ENCODE measurements at regions of chr9 and their contacts with region 1.

Region 1: DNA sequence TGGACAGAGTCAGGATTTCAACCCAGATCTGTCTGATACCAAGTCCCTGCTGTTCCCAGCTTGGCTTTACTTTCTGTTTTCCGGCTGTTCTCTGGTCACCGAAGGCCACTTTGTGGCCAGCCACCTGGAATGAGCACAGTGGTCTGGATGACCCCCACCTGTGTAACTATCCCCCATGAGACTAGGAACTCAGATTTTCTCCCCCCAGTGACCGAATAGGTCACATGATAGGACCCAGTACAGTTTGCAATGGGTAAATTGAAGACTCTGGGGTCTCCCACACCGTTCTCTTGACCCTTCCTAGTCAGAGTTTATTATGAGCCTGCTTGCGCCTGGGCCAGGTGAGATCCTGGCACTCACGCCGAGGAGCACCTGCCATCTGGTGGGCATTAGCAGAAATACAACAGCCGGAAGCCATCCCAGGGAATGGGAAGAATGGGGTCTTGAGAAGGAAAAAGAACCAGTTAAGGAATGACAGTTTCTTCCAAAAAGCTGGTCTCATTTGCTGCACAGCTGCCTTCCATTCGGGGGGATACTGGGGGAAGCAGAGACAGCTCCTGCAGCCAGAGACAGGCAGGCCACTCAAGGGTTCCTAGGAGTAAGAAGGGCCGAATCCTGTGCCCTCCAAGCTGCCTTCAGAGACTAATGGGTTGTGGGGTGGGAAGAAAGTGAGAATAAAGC is 7.1 kb downstream of the PHYHD1 start:
- DNase-seq: peak; percentile 20 to 67 (median 38)
- H3K4me3 ChIP-seq: no peak overlapping the region
- H3K4me3 Mint-ChIP-seq: no peak overlapping the region
- H3K27ac ChIP-seq: no peak overlapping the region
- H3K27ac Mint-ChIP-seq: peak overlapping the region in 1 of 8 donors; percentile 82
- H3K4me1 ChIP-seq: peaks cover 5% of the 10 kb centered on the region
- H3K4me1 Mint-ChIP-seq: peaks cover 6 to 9% (median 6%) of the 10 kb centered on the region in 3 donors
- H3K27me3 ChIP-seq: no peaks in the 10 kb centered on the region
- H3K27me3 Mint-ChIP-seq: no peaks in the 10 kb centered on the region

Region 2: DNA sequence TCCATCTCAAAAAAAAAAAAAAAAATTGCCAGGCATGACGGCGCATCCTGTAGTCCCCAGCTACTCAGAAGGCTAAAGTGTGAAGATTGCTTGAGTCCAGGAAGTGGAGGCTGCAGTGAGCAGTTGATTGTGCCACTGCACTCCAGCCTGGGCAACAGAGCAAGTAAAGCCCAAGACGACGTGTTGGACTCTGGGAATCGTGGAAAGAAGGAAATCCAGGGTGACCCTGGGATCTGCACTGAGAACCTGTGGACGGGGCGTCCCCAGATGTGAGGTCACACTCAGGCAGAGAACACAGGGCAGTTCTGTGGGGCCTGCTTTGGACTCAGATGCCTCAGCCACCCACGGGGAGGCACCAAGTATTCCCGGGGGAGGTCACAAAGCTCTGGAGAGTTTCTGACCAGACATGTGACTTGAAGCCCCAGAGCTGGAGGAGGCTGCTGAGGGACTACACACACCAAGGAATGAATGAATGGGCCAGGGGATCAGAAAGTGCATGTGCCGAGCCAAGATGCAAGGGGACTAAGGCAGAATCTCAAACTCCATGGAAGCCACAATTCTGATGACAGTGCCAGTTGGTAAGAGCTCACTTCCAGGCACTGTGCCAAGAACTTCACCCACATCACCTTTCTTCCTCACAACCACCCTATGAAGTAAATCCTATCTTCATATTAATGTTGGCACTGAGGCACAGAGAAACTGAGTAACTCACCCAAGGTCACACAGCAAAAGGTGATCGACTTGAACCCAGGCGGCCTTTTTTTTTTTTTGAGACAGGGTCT is 284.2 kb before region 1 on chr9:
- CTCF ChIA-PET with region 1: interaction called, 16 read pairs
- POLR2A ChIA-PET with region 1: interaction called, 8 read pairs
- DNase-seq: no peak
- H3K4me3 ChIP-seq: no peak overlapping the region
- H3K4me3 Mint-ChIP-seq: no peak overlapping the region
- H3K27ac ChIP-seq: no peak overlapping the region
- H3K27ac Mint-ChIP-seq: peak overlapping the region in 3 of 8 donors; percentile 29 to 51 (median 33)
- H3K4me1 ChIP-seq: no peaks in the 10 kb centered on the region
- H3K4me1 Mint-ChIP-seq: no peaks in the 10 kb centered on the region
- H3K27me3 ChIP-seq: no peaks in the 10 kb centered on the region
- H3K27me3 Mint-ChIP-seq: no peaks in the 10 kb centered on the region

Region 3: GRCh38 chr9:128805661-128806060 is 122.2 kb before region 1 on chr9:
- CTCF ChIA-PET with region 1: no interaction called
- POLR2A ChIA-PET with region 1: no interaction called
- DNase-seq: no peak
- H3K4me3 ChIP-seq: no peak overlapping the region
- H3K4me3 Mint-ChIP-seq: no peak overlapping the region
- H3K27ac ChIP-seq: no peak overlapping the region
- H3K27ac Mint-ChIP-seq: no peak overlapping the region
- H3K4me1 ChIP-seq: no peaks in the 10 kb centered on the region
- H3K4me1 Mint-ChIP-seq: no peaks in the 10 kb centered on the region
- H3K27me3 ChIP-seq: no peaks in the 10 kb centered on the region
- H3K27me3 Mint-ChIP-seq: no peaks in the 10 kb centered on the region

Region 4: GRCh38 chr9:128863647-128864046 is 64.2 kb before region 1 on chr9:
- CTCF ChIA-PET with region 1: interaction called, 155 read pairs
- POLR2A ChIA-PET with region 1: no interaction called
- DNase-seq: peak; percentile 72 to 87 (median 78)
- H3K4me3 ChIP-seq: no peak overlapping the region
- H3K4me3 Mint-ChIP-seq: no peak overlapping the region
- H3K27ac ChIP-seq: no peak overlapping the region
- H3K27ac Mint-ChIP-seq: peak overlapping the region in 5 of 8 donors; percentile 41 to 78 (median 61)
- H3K4me1 ChIP-seq: peaks cover 5% of the 10 kb centered on the region
- H3K4me1 Mint-ChIP-seq: peaks cover 3 to 6% (median 4%) of the 10 kb centered on the region in 3 donors
- H3K27me3 ChIP-seq: no peaks in the 10 kb centered on the region
- H3K27me3 Mint-ChIP-seq: no peaks in the 10 kb centered on the region

Region 5: GRCh38 chr9:128881901-128882681 is 45.8 kb before region 1 on chr9 and contains the starts of genes KYAT1 and LRRC8A:
- CTCF ChIA-PET with region 1: interaction called, 15 read pairs
- POLR2A ChIA-PET with region 1: no interaction called
- DNase-seq: peak; percentile 96 to 98 (median 97)
- H3K4me3 ChIP-seq: peak within 1 kb of the TSS; percentile 98
- H3K4me3 Mint-ChIP-seq: peak within 1 kb of the TSS; percentile 93 to 99 (median 98)
- H3K27ac ChIP-seq: peak within 1 kb of the TSS; percentile 94
- H3K27ac Mint-ChIP-seq: peak within 1 kb of the TSS; percentile 80 to 98 (median 96)
- H3K4me1 ChIP-seq: peaks cover 39% of the 10 kb centered on the region
- H3K4me1 Mint-ChIP-seq: peaks cover 41 to 68% (median 51%) of the 10 kb centered on the region in 3 donors
- H3K27me3 ChIP-seq: no peaks in the 10 kb centered on the region
- H3K27me3 Mint-ChIP-seq: no peaks in the 10 kb centered on the region
- total RNA-seq, gene KYAT1: 8.9 to 10.4 TPM
- total RNA-seq, gene LRRC8A: 27.3 to 27.6 TPM

Region 6: DNA sequence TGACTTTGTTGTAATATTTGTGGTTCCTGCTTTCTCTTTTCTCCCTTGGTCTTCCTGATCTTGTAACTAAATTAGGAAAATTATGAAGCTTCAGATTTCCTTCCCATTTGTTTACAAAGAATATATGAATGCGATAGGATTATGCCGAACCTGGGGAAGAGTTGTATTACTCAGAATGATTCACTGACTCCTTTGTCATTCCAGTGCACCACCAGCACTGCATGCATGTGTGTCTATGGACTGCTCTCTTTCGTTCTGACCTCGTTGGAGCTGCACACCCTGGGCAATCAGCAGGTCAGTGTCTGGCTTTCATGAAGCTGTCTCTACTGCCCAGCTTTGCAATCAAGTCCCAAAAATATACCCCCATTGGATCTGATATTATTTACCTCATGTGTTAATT is 45.1 kb after region 1 on chr9:
- CTCF ChIA-PET with region 1: no interaction called
- POLR2A ChIA-PET with region 1: no interaction called
- DNase-seq: no peak
- H3K4me3 ChIP-seq: no peak overlapping the region
- H3K4me3 Mint-ChIP-seq: no peak overlapping the region
- H3K27ac ChIP-seq: no peak overlapping the region
- H3K27ac Mint-ChIP-seq: peak overlapping the region in 1 of 8 donors; percentile 81
- H3K4me1 ChIP-seq: no peaks in the 10 kb centered on the region
- H3K4me1 Mint-ChIP-seq: no peaks in the 10 kb centered on the region
- H3K27me3 ChIP-seq: no peaks in the 10 kb centered on the region
- H3K27me3 Mint-ChIP-seq: no peaks in the 10 kb centered on the region

Region 7: GRCh38 chr9:129500161-129500862 is 572.4 kb after region 1 on chr9:
- CTCF ChIA-PET with region 1: no interaction called
- POLR2A ChIA-PET with region 1: no interaction called
- DNase-seq: no peak
- H3K4me3 ChIP-seq: no peak overlapping the region
- H3K4me3 Mint-ChIP-seq: peak overlapping the region in 1 of 7 donors; percentile 36
- H3K27ac ChIP-seq: no peak overlapping the region
- H3K27ac Mint-ChIP-seq: peak overlapping the region in 2 of 8 donors; percentile 8 to 32
- H3K4me1 ChIP-seq: peaks cover 17% of the 10 kb centered on the region
- H3K4me1 Mint-ChIP-seq: peaks cover 9 to 34% (median 20%) of the 10 kb centered on the region in 3 donors
- H3K27me3 ChIP-seq: no peaks in the 10 kb centered on the region
- H3K27me3 Mint-ChIP-seq: no peaks in the 10 kb centered on the region

Measured in CD8-positive, alpha-beta memory T cell (primary cell).